Mammary epithelial cell (primary cell): ENCODE measurements at regions of chr9 and their contacts with region 1.

Region 1: GRCh38 chr9:128361986-128362646 is 9.1 kb upstream of the URM1 start:
- DNase-seq: peak; percentile 72
- H3K4me3 ChIP-seq: peak overlapping the region in 2 of 3 experiments; percentile 26 to 56
- H3K27ac ChIP-seq: no peak overlapping the region
- H3K4me1 ChIP-seq: peaks cover 25% of the 10 kb centered on the region
- H3K27me3 ChIP-seq: no peaks in the 10 kb centered on the region
- CTCF ChIP-seq: peak; percentile 87 to 91

Region 2: DNA sequence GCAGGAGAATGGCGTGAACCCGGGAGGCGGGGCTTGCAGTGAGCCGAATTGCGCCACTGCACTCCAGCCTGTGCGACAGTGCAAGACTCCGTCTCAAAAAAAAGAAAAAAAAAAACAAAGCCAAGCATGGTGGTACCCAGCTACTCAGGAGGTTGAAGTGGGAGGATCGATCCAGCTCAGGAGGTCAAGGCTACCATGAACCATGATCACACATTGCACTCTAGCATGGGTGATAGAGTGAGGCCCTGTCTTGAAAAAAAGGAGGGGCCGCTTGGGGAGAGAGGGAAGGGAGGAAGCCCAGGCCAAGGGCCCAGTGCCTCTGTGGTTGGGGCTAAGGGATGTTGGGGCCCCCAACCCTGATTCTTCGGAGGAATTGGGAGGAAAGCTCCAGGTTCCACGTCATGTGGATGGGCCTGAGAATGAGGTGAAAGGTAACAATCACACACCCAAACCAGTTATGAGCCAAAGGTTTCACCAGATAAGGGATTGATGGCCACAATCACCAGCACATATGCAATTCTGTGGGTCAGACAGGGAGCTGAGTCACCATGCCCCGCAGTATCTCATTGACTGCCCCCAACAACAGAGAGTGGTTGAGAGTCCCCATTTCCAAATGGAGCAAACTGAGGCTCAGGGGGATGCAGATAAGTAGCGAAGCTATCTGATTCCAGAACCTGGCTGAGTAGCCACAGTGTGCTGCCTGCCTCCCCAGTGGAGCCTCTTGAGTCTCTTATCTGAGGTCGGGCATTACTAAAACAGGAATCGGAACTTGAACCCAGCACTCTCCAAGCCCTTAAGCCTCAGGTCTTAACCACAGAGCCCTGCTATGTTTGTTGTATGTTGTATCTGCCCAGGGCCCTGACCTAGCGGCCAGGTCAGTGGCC is 65.5 kb before region 1 on chr9:
- CTCF ChIA-PET with region 1: interaction called, 6 read pairs
- dilution Hi-C with region 1: no loop called
- in situ Hi-C with region 1: no loop called
- intact Hi-C with region 1: loop called (anchors 1 kb)
- DNase-seq: no peak
- H3K4me3 ChIP-seq: no peak overlapping the region
- H3K27ac ChIP-seq: no peak overlapping the region
- H3K4me1 ChIP-seq: no peaks in the 10 kb centered on the region
- H3K27me3 ChIP-seq: no peaks in the 10 kb centered on the region
- CTCF ChIP-seq: no peak

Region 3: DNA sequence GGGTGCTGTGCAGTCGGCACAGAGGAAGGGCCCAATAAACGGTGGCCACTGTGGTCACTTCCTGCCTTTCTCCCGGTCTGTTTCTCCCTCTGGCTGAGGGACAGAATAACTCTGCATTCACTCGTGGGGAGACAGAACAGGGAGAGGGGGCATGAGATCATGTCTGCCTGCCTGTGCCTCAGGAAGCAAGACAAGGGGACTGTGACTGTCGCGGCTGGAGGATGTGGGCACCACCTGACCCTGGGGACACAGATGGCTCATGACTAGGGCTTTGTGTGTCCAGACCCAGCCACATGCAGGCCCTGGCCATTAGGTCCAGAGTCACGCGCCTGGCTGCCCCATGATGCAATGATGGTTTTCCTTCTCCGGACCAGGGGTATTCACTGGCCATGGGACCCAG is 45.7 kb before region 1 on chr9:
- CTCF ChIA-PET with region 1: no interaction called
- dilution Hi-C with region 1: loop called (anchors 5 kb)
- in situ Hi-C with region 1: no loop called
- intact Hi-C with region 1: no loop called
- DNase-seq: no peak
- H3K4me3 ChIP-seq: no peak overlapping the region
- H3K27ac ChIP-seq: no peak overlapping the region
- H3K4me1 ChIP-seq: peaks cover 4% of the 10 kb centered on the region
- H3K27me3 ChIP-seq: no peaks in the 10 kb centered on the region
- CTCF ChIP-seq: no peak